GM12878 (cell line): ENCODE measurements at regions of chr15 and their contacts with region 1.

Region 1: DNA sequence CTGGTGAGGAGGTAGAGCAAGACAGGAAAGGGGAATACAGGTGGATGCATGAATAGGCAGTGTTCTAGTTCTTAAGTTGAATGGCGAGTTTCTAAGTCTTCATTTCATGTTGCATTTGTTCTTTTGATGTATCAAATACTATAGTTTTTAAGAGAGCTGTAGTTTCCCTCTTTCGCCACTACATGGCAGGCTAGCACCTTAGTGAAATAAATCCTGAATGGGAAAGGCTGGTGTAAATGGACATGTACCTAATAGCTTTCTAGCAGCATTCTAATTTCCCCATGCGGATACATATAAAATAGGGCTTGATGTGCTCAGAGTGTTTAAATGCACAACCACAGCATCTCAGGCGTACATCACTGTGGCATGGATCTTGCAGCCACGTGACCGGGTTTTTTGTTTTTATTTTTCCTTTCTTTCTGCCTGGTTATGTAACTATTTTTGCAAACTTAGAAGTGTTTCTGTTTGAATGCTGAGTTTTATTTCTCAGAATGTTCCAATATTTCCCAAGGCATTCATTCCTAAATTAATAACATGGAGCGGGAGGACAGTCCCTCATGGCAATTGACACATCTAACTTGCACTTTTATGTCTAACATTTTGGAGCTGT is 23.5 kb upstream of the CLN6 start:
- DNase-seq: peak; percentile 26
- ATAC-seq: peak; percentile 79
- H3K4me3 ChIP-seq: no peak overlapping the region
- H3K27ac ChIP-seq: no peak overlapping the region
- H3K4me1 ChIP-seq: no peaks in the 10 kb centered on the region
- H3K27me3 ChIP-seq: no peaks in the 10 kb centered on the region; a peak in 2 of 4 replicates
- CTCF ChIP-seq: peak; percentile 80 to 91 (median 87)
- EP300 ChIP-seq: no peak
- POLR2A ChIP-seq: no peak
- RAD21 ChIP-seq: peak; percentile 93

Region 2: GRCh38 chr15:68229386-68230156 is 23.5 kb before region 1 on chr15 and contains the start of gene CLN6:
- CTCF ChIA-PET with region 1: interaction called, 14 read pairs
- POLR2A ChIA-PET with region 1: no interaction called
- RAD21 ChIA-PET with region 1: no interaction called
- SMC1A ChIA-PET with region 1: interaction called, 7 read pairs
- in situ Hi-C with region 1: no loop called
- intact Hi-C with region 1: no loop called
- DNase-seq: peak; percentile 48
- ATAC-seq: peak; percentile 84
- H3K4me3 ChIP-seq: peak within 1 kb of the TSS; percentile 99
- H3K27ac ChIP-seq: peak within 1 kb of the TSS; percentile 90
- H3K4me1 ChIP-seq: peaks cover 38% of the 10 kb centered on the region
- H3K27me3 ChIP-seq: no peaks in the 10 kb centered on the region
- CTCF ChIP-seq: no peak
- EP300 ChIP-seq: no peak
- POLR2A ChIP-seq: peak; percentile 87
- RAD21 ChIP-seq: no peak; the same call in 1 of the 2 replicates
- polyA plus RNA-seq, gene CLN6: 0.74 to 1.4 TPM

Region 3: DNA sequence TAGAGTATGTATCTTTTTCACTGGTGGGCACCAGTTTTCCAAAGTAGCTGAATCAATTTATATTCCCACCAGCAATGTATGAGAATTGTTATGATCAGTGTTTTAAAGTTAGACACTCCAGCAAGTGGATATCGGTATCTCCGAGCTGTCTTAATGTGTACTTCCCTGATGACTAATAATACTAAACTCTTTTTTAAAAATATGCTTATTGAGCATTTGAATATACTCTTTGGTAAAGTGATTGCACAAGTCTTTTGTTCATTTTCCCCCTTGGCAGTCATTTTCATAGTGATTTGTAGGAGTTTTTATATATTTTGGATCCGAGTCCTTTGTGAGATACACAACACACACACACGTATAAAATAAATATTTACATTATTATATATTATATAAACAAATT is 12.1 kb after region 1 on chr15:
- CTCF ChIA-PET with region 1: interaction called, 11 read pairs
- POLR2A ChIA-PET with region 1: no interaction called
- RAD21 ChIA-PET with region 1: interaction called, 3 read pairs
- SMC1A ChIA-PET with region 1: interaction called, 12 read pairs
- in situ Hi-C with region 1: no loop called
- intact Hi-C with region 1: no loop called
- DNase-seq: no peak
- ATAC-seq: no peak
- H3K4me3 ChIP-seq: no peak overlapping the region
- H3K27ac ChIP-seq: no peak overlapping the region
- H3K4me1 ChIP-seq: no peaks in the 10 kb centered on the region
- H3K27me3 ChIP-seq: no peaks in the 10 kb centered on the region; a peak in 2 of 4 replicates
- CTCF ChIP-seq: no peak
- EP300 ChIP-seq: no peak
- POLR2A ChIP-seq: no peak
- RAD21 ChIP-seq: no peak

Region 4: DNA sequence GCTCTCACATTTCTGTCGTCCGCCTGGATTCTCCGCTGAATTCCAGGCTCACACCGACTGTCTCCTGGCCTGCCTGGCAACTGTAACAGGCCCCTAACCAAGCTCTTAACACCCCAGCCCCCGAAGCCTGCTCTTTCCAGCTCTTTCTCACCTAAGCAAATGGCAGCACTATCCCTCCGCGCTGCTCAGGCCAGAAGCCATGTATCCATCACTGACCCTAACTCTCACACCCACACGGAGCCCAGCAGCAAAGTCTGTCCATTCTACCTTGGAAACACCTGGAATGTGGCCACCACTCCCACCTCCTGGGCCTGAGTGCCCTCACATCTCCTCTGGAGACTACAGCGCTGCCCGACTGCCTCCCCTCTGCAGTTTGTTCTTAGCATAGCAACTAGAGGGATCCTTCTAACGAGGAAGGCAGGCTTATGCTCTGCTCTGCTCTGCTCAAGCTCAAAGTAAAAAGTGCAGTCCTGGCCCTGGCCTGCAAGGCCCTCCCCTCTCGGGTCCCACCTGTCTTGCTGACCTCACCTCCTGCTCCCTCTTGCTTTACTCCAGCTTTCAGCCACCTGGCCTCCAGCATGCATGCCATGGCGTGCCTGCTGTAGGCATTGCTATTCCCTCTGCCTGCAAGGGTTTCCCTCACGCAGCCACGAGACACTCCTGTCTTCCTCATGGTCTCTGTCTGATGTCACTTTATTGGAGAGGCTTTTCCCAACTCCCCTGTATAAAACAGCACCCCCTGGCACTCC is 51.7 kb after region 1 on chr15:
- CTCF ChIA-PET with region 1: interaction called, 114 read pairs
- POLR2A ChIA-PET with region 1: interaction called, 4 read pairs
- RAD21 ChIA-PET with region 1: interaction called, 57 read pairs
- SMC1A ChIA-PET with region 1: interaction called, 30 read pairs
- in situ Hi-C with region 1: no loop called
- intact Hi-C with region 1: loop called (anchors 1 kb)
- DNase-seq: no peak
- ATAC-seq: no peak
- H3K4me3 ChIP-seq: no peak overlapping the region
- H3K27ac ChIP-seq: no peak overlapping the region
- H3K4me1 ChIP-seq: peaks cover 11% of the 10 kb centered on the region
- H3K27me3 ChIP-seq: no peaks in the 10 kb centered on the region
- CTCF ChIP-seq: no peak
- EP300 ChIP-seq: no peak
- POLR2A ChIP-seq: no peak
- RAD21 ChIP-seq: no peak

Region 5: GRCh38 chr15:68383161-68384074 is 130.4 kb after region 1 on chr15:
- CTCF ChIA-PET with region 1: interaction called, 6 read pairs
- POLR2A ChIA-PET with region 1: no interaction called
- RAD21 ChIA-PET with region 1: no interaction called
- SMC1A ChIA-PET with region 1: interaction called, 4 read pairs
- in situ Hi-C with region 1: loop called (anchors 5 kb)
- intact Hi-C with region 1: loop called (anchors 5 kb)
- DNase-seq: no peak
- ATAC-seq: peak; percentile 79
- H3K4me3 ChIP-seq: no peak overlapping the region
- H3K27ac ChIP-seq: no peak overlapping the region
- H3K4me1 ChIP-seq: no peaks in the 10 kb centered on the region
- H3K27me3 ChIP-seq: no peaks in the 10 kb centered on the region; a peak in 2 of 4 replicates
- CTCF ChIP-seq: peak; percentile 54 to 69 (median 59)
- EP300 ChIP-seq: no peak
- POLR2A ChIP-seq: no peak
- RAD21 ChIP-seq: peak; percentile 60

Region 6: GRCh38 chr15:68464448-68465090 is 211.5 kb after region 1 on chr15:
- CTCF ChIA-PET with region 1: no interaction called
- POLR2A ChIA-PET with region 1: no interaction called
- RAD21 ChIA-PET with region 1: no interaction called
- SMC1A ChIA-PET with region 1: no interaction called
- in situ Hi-C with region 1: no loop called
- intact Hi-C with region 1: no loop called
- DNase-seq: no peak
- ATAC-seq: no peak
- H3K4me3 ChIP-seq: no peak overlapping the region
- H3K27ac ChIP-seq: no peak overlapping the region
- H3K4me1 ChIP-seq: no peaks in the 10 kb centered on the region
- H3K27me3 ChIP-seq: no peaks in the 10 kb centered on the region
- CTCF ChIP-seq: no peak
- EP300 ChIP-seq: no peak
- POLR2A ChIP-seq: no peak
- RAD21 ChIP-seq: no peak

Region 7: DNA sequence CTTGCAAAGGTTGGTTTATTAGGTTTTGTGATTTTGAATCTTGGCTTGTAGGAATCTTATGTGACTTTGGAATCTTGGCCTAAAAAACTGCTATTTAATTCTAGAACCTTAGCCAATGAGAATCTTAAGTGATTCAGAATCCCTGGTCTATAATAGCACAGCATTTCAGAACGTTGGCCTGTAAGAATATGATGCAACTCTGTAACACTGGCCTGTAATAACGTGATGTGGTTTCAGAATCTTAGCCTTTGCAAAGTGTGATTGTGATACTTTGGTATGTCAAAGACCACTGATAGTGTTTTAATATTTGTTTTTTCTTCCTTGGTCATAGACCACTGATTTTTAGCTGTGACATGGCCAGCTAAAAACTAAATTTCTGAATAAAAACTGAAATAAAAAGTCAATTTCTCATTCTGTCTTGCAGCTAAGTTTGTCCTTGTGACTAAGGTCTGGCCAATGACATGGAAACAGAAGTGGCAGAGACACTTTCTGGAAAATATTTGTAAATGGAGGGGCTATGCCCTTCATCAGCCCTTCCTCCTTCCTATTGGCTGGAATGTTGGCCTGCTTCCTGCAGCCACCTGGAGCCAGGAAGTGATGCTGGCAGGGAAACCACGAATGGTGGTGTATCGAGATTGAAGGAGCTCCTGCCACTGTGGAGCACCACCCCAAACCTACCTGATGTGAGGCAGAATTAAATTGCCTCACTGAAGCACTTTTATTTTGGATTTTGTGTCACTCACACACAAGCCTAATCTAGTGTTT is 283.5 kb after region 1 on chr15:
- CTCF ChIA-PET with region 1: interaction called, 11 read pairs
- POLR2A ChIA-PET with region 1: no interaction called
- RAD21 ChIA-PET with region 1: no interaction called
- SMC1A ChIA-PET with region 1: interaction called, 6 read pairs
- in situ Hi-C with region 1: no loop called
- intact Hi-C with region 1: loop called (anchors 2 kb)
- DNase-seq: no peak
- ATAC-seq: peak; percentile 54
- H3K4me3 ChIP-seq: no peak overlapping the region
- H3K27ac ChIP-seq: no peak overlapping the region
- H3K4me1 ChIP-seq: no peaks in the 10 kb centered on the region
- H3K27me3 ChIP-seq: no peaks in the 10 kb centered on the region
- CTCF ChIP-seq: no peak
- EP300 ChIP-seq: no peak
- POLR2A ChIP-seq: no peak
- RAD21 ChIP-seq: no peak

Region 8: DNA sequence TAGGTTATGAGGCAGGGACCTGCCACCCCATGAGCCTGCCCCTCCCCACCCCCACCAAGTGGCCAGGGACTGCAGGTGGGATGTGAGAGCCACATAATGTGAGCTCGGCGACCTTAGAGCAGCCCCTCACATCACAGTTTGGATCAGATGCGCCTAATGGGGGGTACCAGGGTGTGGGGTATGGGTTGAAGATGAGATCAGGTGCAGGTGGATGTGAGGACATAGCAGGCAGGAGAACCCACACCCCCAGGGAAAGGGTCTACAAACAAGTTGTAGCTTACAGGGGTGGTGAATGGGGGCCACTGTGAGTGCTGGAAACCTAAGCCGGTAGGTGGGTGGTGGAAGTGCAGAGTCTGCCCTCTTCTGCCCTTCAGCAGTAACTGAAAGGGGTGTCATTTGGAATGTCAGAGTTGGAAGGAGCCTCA is 419.8 kb after region 1 on chr15:
- CTCF ChIA-PET with region 1: interaction called, 20 read pairs
- POLR2A ChIA-PET with region 1: no interaction called
- RAD21 ChIA-PET with region 1: interaction called, 19 read pairs
- SMC1A ChIA-PET with region 1: interaction called, 3 read pairs
- in situ Hi-C with region 1: no loop called
- intact Hi-C with region 1: no loop called
- DNase-seq: no peak
- ATAC-seq: no peak
- H3K4me3 ChIP-seq: no peak overlapping the region
- H3K27ac ChIP-seq: no peak overlapping the region
- H3K4me1 ChIP-seq: peaks cover 6% of the 10 kb centered on the region
- H3K27me3 ChIP-seq: no peaks in the 10 kb centered on the region; a peak in 1 of 4 replicates
- CTCF ChIP-seq: no peak; a peak in 1 of 6 replicates
- EP300 ChIP-seq: no peak
- POLR2A ChIP-seq: no peak
- RAD21 ChIP-seq: no peak